Calu3 (cell line): ENCODE measurements at regions of chr15 and their contacts with region 1.

Region 1: GRCh38 chr15:45863876-45864580 is 229.2 kb downstream of the SQOR start:
- DNase-seq: peak; percentile 37
- H3K4me3 Mint-ChIP-seq: no peak overlapping the region
- H3K27ac Mint-ChIP-seq: no peak overlapping the region
- H3K4me1 Mint-ChIP-seq: peaks cover 13% of the 10 kb centered on the region
- H3K27me3 Mint-ChIP-seq: no peaks in the 10 kb centered on the region
- CTCF ChIP-seq: no peak

Region 2: DNA sequence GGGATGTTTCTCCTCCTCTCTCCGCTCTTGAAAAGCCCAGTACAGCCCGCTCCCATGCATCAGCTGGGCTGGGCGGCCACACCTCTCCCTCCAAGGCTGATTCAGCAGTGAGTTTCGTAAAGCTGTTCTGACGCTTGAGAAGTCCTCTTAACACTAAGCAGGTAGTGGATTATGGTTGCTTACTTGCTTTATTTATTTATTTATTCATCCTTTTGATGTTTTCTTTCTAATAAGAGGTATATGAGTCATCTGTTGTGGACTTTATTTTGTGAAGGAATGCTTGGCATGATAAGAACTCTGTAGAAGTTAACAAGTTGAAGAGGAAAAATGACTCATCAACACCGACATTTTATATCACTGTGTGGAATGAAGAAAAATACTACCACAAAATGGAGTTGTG is 55.8 kb after region 1 on chr15:
- CTCF ChIA-PET with region 1: no interaction called
- intact Hi-C with region 1: loop called (anchors 2 kb)
- DNase-seq: peak; percentile 59
- H3K4me3 Mint-ChIP-seq: no peak overlapping the region
- H3K27ac Mint-ChIP-seq: no peak overlapping the region
- H3K4me1 Mint-ChIP-seq: peaks cover 9% of the 10 kb centered on the region
- H3K27me3 Mint-ChIP-seq: no peaks in the 10 kb centered on the region
- CTCF ChIP-seq: no peak

Region 3: GRCh38 chr15:46409841-46410301 is 545.8 kb after region 1 on chr15:
- CTCF ChIA-PET with region 1: no interaction called
- intact Hi-C with region 1: no loop called
- DNase-seq: no peak
- H3K4me3 Mint-ChIP-seq: no peak overlapping the region
- H3K27ac Mint-ChIP-seq: no peak overlapping the region
- H3K4me1 Mint-ChIP-seq: no peaks in the 10 kb centered on the region
- H3K27me3 Mint-ChIP-seq: no peaks in the 10 kb centered on the region
- CTCF ChIP-seq: no peak